CD8-positive, alpha-beta T cell (primary cell): ENCODE measurements at regions of chr13 and their contacts with region 1.

Region 1: DNA sequence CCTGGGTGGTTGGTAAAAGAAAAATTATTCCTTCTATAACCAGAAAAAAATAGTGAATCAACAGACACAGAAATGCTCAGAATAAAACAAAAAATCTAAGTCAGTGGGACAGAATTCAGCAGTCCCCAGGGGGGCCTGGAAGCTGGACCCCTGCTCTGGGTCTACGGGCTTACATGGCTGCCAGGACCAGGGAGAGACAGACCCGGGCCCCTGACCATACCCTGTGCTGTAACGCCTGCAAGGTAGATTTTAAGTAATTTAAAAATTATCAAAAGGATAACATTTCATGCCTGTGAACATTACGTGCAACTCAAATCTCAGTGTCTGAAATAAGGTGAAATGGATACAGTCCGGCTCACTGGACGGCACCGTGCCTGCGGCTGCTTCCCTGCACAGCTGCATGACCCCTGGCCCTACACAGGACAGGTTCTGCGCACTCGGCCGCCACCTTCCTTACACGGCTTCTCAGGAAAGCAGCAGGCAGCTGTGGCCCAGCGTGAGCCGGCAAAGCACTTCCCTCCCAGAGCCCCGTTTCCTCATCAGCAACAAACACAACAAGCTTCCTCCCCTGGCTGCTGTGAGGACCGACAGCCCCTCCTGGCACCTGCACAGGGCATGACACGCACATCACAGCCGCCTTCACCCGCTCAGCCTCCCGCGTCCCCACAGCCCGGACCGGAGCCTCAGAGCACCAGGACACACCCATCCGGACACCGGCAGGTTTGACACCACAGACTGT is 22.2 kb downstream of the RASA3 start:
- DNase-seq: peak; percentile 64 to 93 (median 80)
- ATAC-seq: peak; percentile 86
- H3K4me3 ChIP-seq: peak overlapping the region; percentile 40 to 53
- H3K4me3 Mint-ChIP-seq: peak overlapping the region; percentile 83
- H3K27ac ChIP-seq: peak overlapping the region; percentile 50 to 80
- H3K27ac Mint-ChIP-seq: peak overlapping the region; percentile 94
- H3K4me1 ChIP-seq: peaks cover 95% of the 10 kb centered on the region
- H3K4me1 Mint-ChIP-seq: peaks cover 82% of the 10 kb centered on the region
- H3K27me3 ChIP-seq: no peaks in the 10 kb centered on the region
- H3K27me3 Mint-ChIP-seq: no peaks in the 10 kb centered on the region
- CTCF ChIP-seq: peak; percentile 69

Region 2: DNA sequence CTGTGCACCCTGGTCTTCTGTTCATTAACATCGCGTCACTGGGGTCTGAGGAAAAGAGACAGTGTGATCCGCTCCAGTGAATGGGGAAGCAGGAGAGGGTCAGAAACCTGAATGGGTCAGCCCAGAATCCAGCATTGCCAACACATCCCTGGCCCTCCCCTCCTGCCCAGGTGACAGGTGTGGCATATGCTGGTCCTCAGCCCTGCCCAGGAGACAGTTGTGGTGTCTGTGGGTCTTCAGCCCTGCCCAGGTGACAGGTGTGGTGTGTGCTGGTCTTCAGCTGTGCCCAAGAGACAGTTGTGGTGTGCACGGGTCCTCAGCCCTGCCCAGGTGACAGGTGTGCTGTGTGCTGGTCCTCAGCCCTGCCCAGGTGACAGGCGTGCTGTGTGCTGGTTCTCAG is 517.7 kb before region 1 on chr13:
- CTCF ChIA-PET with region 1: no interaction called
- POLR2A ChIA-PET with region 1: no interaction called
- intact Hi-C with region 1: no loop called
- DNase-seq: peak in 1 of 9 experiments; percentile 23
- ATAC-seq: no peak
- H3K4me3 ChIP-seq: no peak overlapping the region
- H3K4me3 Mint-ChIP-seq: no peak overlapping the region
- H3K27ac ChIP-seq: no peak overlapping the region
- H3K27ac Mint-ChIP-seq: no peak overlapping the region
- H3K4me1 ChIP-seq: peaks cover 8% of the 10 kb centered on the region
- H3K4me1 Mint-ChIP-seq: peaks cover 27% of the 10 kb centered on the region
- H3K27me3 ChIP-seq: no peaks in the 10 kb centered on the region
- H3K27me3 Mint-ChIP-seq: no peaks in the 10 kb centered on the region
- CTCF ChIP-seq: no peak

Region 3: GRCh38 chr13:113951246-113951999 is 158.8 kb before region 1 on chr13:
- CTCF ChIA-PET with region 1: interaction called, 3 read pairs
- POLR2A ChIA-PET with region 1: no interaction called
- intact Hi-C with region 1: loop called (anchors 2 to 5 kb)
- DNase-seq: peak; percentile 14 to 70 (median 36)
- ATAC-seq: peak; percentile 75
- H3K4me3 ChIP-seq: no peak overlapping the region
- H3K4me3 Mint-ChIP-seq: no peak overlapping the region
- H3K27ac ChIP-seq: no peak overlapping the region
- H3K27ac Mint-ChIP-seq: peak overlapping the region; percentile 57
- H3K4me1 ChIP-seq: peaks cover 3% of the 10 kb centered on the region
- H3K4me1 Mint-ChIP-seq: peaks cover 4% of the 10 kb centered on the region
- H3K27me3 ChIP-seq: no peaks in the 10 kb centered on the region
- H3K27me3 Mint-ChIP-seq: no peaks in the 10 kb centered on the region
- CTCF ChIP-seq: no peak

Region 4: DNA sequence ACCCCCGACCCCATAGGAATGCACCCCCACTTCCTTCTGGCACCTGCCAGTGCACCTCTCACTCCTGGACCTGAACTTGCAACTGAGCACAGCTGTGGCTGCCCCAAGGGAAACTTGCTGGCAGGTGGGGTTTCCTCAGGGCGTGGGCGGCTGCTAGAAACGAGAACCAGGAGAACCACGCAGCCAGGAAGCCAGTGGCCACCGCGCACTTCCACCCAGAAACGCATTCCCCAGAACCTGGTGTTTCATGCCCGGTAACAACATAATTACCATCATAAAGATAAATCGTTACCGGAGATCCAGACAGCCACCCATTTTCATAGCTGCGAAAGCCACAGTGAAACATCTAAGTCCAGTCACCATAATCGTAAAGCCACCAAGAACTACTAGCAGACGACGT is 61.2 kb before region 1 on chr13:
- CTCF ChIA-PET with region 1: interaction called, 9 read pairs
- POLR2A ChIA-PET with region 1: no interaction called
- intact Hi-C with region 1: loop called (anchors 2 kb)
- DNase-seq: peak in 8 of 9 experiments; percentile 22 to 70 (median 54)
- ATAC-seq: peak; percentile 45
- H3K4me3 ChIP-seq: no peak overlapping the region
- H3K4me3 Mint-ChIP-seq: peak overlapping the region; percentile 57
- H3K27ac ChIP-seq: peak overlapping the region in 1 of 2 experiments; percentile 52
- H3K27ac Mint-ChIP-seq: peak overlapping the region; percentile 88
- H3K4me1 ChIP-seq: peaks cover 78% of the 10 kb centered on the region
- H3K4me1 Mint-ChIP-seq: peaks cover 64% of the 10 kb centered on the region
- H3K27me3 ChIP-seq: no peaks in the 10 kb centered on the region
- H3K27me3 Mint-ChIP-seq: no peaks in the 10 kb centered on the region
- CTCF ChIP-seq: no peak

Region 5: DNA sequence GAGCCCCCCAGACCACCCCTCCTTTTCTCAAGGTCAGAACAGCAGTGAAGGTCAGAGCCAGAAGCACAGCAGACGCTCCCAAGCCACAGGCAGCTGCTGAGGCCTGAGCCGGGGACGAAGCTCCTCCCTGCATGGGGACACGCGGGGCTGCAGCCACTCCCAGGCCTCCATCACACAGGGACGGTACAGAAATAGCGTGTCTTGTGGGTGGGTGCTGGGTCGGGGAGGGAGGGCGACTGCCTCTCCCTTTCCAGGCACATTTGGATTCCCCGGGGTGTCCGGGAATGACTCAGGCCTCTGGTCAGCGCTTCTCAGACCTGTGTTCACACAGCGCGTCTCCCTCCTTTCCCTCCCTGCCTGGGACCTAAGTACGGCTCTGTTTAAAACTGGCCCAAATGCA is 11.1 kb before region 1 on chr13:
- CTCF ChIA-PET with region 1: interaction called, 17 read pairs
- POLR2A ChIA-PET with region 1: interaction called, 3 read pairs
- intact Hi-C with region 1: no loop called
- DNase-seq: peak in 1 of 9 experiments; percentile 11
- ATAC-seq: no peak
- H3K4me3 ChIP-seq: no peak overlapping the region
- H3K4me3 Mint-ChIP-seq: no peak overlapping the region
- H3K27ac ChIP-seq: peak overlapping the region in 1 of 2 experiments; percentile 19
- H3K27ac Mint-ChIP-seq: no peak overlapping the region
- H3K4me1 ChIP-seq: peaks cover 81% of the 10 kb centered on the region
- H3K4me1 Mint-ChIP-seq: peaks cover 75% of the 10 kb centered on the region
- H3K27me3 ChIP-seq: no peaks in the 10 kb centered on the region
- H3K27me3 Mint-ChIP-seq: no peaks in the 10 kb centered on the region
- CTCF ChIP-seq: no peak

Region 6: DNA sequence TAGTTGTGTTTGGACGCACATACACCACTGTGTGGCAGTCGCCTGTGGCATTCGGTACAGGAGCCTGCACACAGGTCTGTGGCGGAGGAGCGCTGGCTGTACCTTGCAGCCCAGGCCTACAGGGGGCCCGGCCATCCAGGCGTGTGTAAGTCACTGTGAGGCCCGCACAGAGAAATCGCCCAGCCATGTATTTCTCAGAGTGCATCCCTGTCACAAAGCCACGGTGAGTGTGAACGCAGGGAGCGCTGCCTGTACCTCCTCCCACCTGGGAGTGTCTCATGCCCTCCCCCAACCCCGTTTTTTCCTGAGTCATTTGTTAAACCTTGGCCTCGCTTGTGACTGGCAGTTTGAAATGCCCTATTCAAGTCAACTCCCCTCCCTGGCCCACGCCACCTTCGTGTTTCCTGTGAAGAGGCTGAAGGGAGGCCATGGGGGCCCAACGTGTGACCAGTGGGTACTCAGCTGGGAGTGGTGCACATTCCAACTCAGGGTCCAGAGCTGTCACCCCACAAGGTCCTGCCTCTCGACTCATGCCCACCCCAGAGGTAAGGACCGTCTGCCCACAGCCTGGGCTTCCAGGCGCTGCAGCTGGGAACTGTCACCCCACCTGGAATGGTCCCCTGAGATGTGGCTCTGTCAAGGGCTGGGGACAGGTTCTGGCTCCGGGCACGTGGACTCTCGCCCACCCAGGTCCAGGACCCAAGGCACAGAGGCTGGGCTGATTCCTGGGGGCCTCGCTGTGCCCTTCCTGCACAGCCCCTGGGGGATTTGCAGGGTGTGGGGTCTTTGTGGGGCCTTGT is 33.7 kb after region 1 on chr13:
- CTCF ChIA-PET with region 1: interaction called, 3 read pairs
- POLR2A ChIA-PET with region 1: interaction called, 13 read pairs
- intact Hi-C with region 1: loop called in 1 of 2 experiments (anchors 5 kb)
- DNase-seq: peak in 7 of 9 experiments; percentile 46 to 81 (median 73)
- ATAC-seq: peak; percentile 15
- H3K4me3 ChIP-seq: peak overlapping the region in 1 of 2 experiments; percentile 23
- H3K4me3 Mint-ChIP-seq: no peak overlapping the region
- H3K27ac ChIP-seq: peak overlapping the region; percentile 80 to 86
- H3K27ac Mint-ChIP-seq: no peak overlapping the region
- H3K4me1 ChIP-seq: peaks cover 85% of the 10 kb centered on the region
- H3K4me1 Mint-ChIP-seq: peaks cover 12% of the 10 kb centered on the region
- H3K27me3 ChIP-seq: no peaks in the 10 kb centered on the region
- H3K27me3 Mint-ChIP-seq: no peaks in the 10 kb centered on the region
- CTCF ChIP-seq: peak; percentile 30